Mammary epithelial cell (primary cell): ENCODE measurements at regions of chr1 and their contacts with region 1.

Region 1: GRCh38 chr1:172443626-172444453 is at the start of gene PIGC:
- DNase-seq: peak; percentile 73
- H3K4me3 ChIP-seq: peak within 1 kb of the TSS; percentile 84 to 89 (median 89)
- H3K27ac ChIP-seq: peak within 1 kb of the TSS; percentile 74
- H3K4me1 ChIP-seq: peaks cover 27% of the 10 kb centered on the region
- H3K27me3 ChIP-seq: no peaks in the 10 kb centered on the region
- CTCF ChIP-seq: peak; percentile 74 to 94
- total RNA-seq, gene PIGC: 17.7 to 18.3 TPM

Region 2: GRCh38 chr1:172041742-172042141 is 402.1 kb before region 1 on chr1:
- CTCF ChIA-PET with region 1: interaction called, 4 read pairs
- dilution Hi-C with region 1: no loop called
- in situ Hi-C with region 1: no loop called
- intact Hi-C with region 1: loop called (anchors 2 kb)
- DNase-seq: no peak
- H3K4me3 ChIP-seq: no peak overlapping the region
- H3K27ac ChIP-seq: no peak overlapping the region
- H3K4me1 ChIP-seq: peaks cover 19% of the 10 kb centered on the region
- H3K27me3 ChIP-seq: no peaks in the 10 kb centered on the region
- CTCF ChIP-seq: peak; percentile 35 to 49

Region 3: GRCh38 chr1:172951730-172952365 is 508.0 kb after region 1 on chr1:
- CTCF ChIA-PET with region 1: no interaction called
- dilution Hi-C with region 1: no loop called
- in situ Hi-C with region 1: no loop called
- intact Hi-C with region 1: no loop called
- DNase-seq: peak; percentile 91
- H3K4me3 ChIP-seq: no peak overlapping the region
- H3K27ac ChIP-seq: no peak overlapping the region
- H3K4me1 ChIP-seq: peaks cover 29% of the 10 kb centered on the region
- H3K27me3 ChIP-seq: no peaks in the 10 kb centered on the region
- CTCF ChIP-seq: no peak